Pancreas (tissue), 10 donors: ENCODE measurements at regions of chr6 and their contacts with region 1.

Region 1: DNA sequence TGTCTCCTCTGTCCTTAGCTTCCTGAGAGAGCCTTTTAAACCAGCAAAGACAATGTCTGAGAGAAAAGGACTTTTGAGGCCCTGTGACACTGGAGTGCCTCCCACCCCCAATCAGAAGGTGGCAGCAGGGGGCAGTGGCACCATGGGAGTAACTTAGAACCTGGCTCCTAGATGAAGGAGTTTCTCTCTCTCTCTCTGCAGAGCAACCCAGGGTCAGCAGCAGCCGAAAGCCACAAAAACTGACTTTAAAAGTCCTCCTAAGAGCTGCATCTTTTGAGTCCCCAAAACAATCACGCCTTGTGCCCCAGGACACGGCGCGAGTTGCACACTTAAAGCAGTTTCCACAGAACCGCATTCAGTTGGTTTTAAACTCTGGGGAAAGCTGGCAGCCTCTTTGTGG is 5.3 kb upstream of the TCP11 start:
- DNase-seq: peak in 2 of 6 donors; percentile 18 to 63
- ATAC-seq: peak in 3 of 4 donors; percentile 68 to 92 (median 84)
- H3K4me3 ChIP-seq: no peak overlapping the region
- H3K27ac ChIP-seq: no peak overlapping the region
- H3K4me1 ChIP-seq: no peaks in the 10 kb centered on the region
- H3K27me3 ChIP-seq: no peaks in the 10 kb centered on the region
- CTCF ChIP-seq: peak in 1 of 4 donors; percentile 40

Region 2: DNA sequence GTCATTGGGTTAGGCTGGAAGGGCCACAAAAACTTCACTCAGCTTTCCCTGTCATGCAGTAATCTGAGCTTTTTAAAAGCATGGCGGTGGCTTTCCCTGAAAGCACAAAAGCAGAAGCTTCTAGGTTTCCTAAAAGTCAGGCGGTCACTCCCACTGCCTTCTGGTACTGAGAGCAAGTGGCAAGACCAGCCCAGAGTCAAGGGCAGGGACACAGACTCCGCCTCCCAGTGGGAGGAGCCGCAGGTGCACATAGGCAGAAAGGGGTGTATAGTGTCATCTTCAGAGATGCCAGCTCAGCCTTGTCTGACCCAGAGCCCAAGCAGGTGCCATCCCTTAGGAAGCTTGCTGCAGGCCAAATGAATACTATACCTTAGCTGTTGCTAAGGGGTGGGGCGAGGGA is 698.5 kb before region 1 on chr6:
- intact Hi-C with region 1: no loop called
- DNase-seq: no peak
- ATAC-seq: peak in 1 of 4 donors; percentile 31
- H3K4me3 ChIP-seq: no peak overlapping the region
- H3K27ac ChIP-seq: no peak overlapping the region
- H3K4me1 ChIP-seq: no peaks in the 10 kb centered on the region
- H3K27me3 ChIP-seq: no peaks in the 10 kb centered on the region
- CTCF ChIP-seq: no peak

Region 3: DNA sequence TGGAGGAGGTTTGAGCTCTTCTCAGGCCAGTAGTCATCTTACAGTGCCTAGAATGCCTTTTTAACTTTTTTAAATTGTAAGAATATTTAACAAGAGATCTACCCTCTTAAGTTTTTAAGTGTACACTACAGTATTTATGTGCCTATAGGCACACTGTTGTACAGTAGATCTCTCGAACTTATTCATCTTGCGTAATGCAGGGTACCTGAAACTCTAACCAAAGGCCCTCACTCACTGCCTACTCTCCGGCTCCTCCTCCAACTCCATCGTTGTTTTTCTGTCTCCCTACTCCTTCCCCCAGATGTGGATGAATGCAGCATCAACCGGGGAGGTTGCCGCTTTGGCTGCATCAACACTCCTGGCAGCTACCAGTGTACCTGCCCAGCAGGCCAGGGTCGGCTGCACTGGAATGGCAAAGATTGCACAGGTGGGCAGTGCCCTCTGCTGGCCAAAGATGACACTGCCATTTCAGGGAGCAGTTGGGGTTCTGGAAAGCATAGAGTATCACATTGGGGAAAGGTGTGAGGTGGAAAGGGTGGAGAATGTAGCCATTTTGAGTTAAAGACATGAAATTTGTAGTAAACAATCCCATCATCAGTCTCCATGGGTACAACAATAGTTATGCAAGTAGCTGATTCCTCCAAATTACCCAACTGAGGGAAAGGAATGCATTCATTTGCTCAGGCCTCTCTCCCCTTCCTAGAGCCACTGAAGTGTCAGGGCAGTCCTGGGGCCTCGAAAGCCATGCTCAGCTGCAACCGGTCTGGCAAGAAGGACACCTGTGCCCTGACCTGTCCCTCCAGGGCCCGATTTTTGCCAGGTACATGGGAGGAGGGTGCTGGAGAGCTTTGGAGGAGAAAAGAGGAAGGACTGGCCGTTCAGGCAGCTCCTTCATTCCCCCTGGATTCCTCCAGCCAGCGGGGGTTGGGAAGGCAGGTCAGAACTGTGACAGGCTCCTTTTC is 94.7 kb after region 1 on chr6:
- intact Hi-C with region 1: loop called in 1 of 3 experiments (anchors 5 kb)
- DNase-seq: peak; percentile 44 to 92 (median 80)
- ATAC-seq: peak; percentile 82 to 98 (median 94)
- H3K4me3 ChIP-seq: no peak overlapping the region
- H3K27ac ChIP-seq: no peak overlapping the region
- H3K4me1 ChIP-seq: no peaks in the 10 kb centered on the region
- H3K27me3 ChIP-seq: no peaks in the 10 kb centered on the region
- CTCF ChIP-seq: peak; percentile 90 to 96 (median 92)

Region 4: DNA sequence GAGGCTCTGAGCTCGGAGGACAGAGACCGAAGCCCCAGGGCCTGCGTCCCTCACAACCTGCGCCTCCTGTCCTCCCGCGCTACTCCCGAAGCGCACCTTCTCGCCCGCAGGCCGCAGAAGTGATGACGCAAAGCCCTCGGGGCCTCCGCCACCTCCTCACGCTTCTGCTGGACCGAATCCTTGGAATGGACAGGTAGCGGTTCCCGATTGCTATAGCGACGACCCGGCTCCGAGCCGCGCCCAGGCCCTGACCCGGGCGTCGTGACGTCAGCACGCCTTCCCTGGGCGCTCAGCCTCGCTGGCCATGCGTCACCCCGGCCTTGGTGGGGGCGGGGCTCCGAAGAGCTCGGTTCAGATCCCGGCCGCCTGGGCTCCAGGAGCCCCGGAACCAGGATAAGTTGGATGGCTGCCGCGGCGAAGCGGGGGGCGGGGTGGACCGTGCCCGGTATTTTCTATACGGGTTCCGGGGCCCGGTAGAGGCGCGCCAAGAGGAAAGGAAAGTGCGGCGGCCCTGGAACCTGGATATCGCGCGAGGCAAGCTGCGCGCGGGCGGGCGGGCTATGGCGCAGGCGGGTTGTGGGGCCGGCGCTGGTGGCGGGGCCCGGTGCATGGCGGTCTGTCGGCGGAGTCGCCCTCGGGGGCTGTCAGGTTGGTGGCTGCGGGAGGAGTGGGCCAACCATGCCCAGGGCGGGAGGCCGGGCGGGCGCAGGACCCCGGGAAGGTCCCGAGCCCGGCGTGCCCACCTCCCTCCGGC is 112.9 kb after region 1 on chr6 and contains the start of gene ZNF76:
- intact Hi-C with region 1: no loop called
- DNase-seq: peak; percentile 98 to 100 (median 99)
- ATAC-seq: peak; percentile 90 to 96 (median 96)
- H3K4me3 ChIP-seq: peak within 1 kb of the TSS; percentile 77 to 97 (median 91)
- H3K27ac ChIP-seq: peak within 1 kb of the TSS; percentile 91 to 96 (median 94)
- H3K4me1 ChIP-seq: peaks cover 0 to 13% (median 0%) of the 10 kb centered on the region in 3 donors
- H3K27me3 ChIP-seq: no peaks in the 10 kb centered on the region
- CTCF ChIP-seq: no peak
- total RNA-seq, gene ZNF76: 14.9 to 25.0 (median 16.3) TPM